SK-N-SH (cell line): ENCODE measurements at regions of chr17 and their contacts with region 1.

Region 1: GRCh38 chr17:19744922-19745757 is 3.0 kb downstream of the ALDH3A1 start:
- DNase-seq: peak; percentile 95
- H3K4me3 ChIP-seq: peak overlapping the region in 1 of 2 experiments; percentile 47; a peak in 3 of 4 replicates
- H3K27ac ChIP-seq: no peak overlapping the region; a peak in 1 of 4 replicates
- H3K4me1 ChIP-seq: peaks cover 0 to 6% of the 10 kb centered on the region in 2 experiments; a peak in 1 of 4 replicates
- H3K27me3 ChIP-seq: no peaks in the 10 kb centered on the region
- CTCF ChIP-seq: peak; percentile 70
- EP300 ChIP-seq: no peak
- RAD21 ChIP-seq: peak; percentile 65

Region 2: DNA sequence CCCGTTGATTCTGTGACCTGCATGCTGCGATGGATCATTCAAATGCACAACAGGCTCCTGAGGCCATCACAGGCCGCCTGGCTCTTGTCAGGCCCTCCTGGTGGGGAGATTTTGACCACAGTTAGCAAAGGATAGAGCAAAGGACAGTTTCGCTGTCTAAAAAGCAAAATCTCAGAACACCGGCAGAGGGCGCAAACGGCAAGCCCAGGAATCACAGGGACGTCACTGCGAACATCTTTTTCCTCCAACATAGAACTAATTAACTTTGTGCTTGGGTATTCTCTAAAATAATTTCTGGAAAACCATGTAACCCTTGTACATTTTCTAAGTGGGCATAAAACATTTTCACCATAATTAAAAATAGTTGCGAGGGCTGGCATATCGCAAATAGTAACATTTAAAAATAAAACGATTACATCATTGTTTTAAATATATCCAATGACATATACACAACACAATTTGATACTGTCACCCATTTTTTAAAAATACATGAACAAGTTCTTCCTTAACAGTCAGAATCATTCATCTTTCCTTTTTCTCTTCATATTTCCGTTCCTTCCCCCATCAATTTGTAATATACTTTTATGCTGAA is 231.1 kb before region 1 on chr17:
- CTCF ChIA-PET with region 1: interaction called, 13 read pairs
- POLR2A ChIA-PET with region 1: no interaction called
- DNase-seq: peak; percentile 74
- H3K4me3 ChIP-seq: no peak overlapping the region; a peak in 1 of 4 replicates
- H3K27ac ChIP-seq: peak overlapping the region in 1 of 2 experiments; percentile 16; a peak in 1 of 4 replicates
- H3K4me1 ChIP-seq: peaks cover 0 to 5% of the 10 kb centered on the region in 2 experiments; a peak in 1 of 4 replicates
- H3K27me3 ChIP-seq: no peaks in the 10 kb centered on the region
- CTCF ChIP-seq: peak; percentile 97
- EP300 ChIP-seq: no peak
- RAD21 ChIP-seq: peak; percentile 98

Region 3: DNA sequence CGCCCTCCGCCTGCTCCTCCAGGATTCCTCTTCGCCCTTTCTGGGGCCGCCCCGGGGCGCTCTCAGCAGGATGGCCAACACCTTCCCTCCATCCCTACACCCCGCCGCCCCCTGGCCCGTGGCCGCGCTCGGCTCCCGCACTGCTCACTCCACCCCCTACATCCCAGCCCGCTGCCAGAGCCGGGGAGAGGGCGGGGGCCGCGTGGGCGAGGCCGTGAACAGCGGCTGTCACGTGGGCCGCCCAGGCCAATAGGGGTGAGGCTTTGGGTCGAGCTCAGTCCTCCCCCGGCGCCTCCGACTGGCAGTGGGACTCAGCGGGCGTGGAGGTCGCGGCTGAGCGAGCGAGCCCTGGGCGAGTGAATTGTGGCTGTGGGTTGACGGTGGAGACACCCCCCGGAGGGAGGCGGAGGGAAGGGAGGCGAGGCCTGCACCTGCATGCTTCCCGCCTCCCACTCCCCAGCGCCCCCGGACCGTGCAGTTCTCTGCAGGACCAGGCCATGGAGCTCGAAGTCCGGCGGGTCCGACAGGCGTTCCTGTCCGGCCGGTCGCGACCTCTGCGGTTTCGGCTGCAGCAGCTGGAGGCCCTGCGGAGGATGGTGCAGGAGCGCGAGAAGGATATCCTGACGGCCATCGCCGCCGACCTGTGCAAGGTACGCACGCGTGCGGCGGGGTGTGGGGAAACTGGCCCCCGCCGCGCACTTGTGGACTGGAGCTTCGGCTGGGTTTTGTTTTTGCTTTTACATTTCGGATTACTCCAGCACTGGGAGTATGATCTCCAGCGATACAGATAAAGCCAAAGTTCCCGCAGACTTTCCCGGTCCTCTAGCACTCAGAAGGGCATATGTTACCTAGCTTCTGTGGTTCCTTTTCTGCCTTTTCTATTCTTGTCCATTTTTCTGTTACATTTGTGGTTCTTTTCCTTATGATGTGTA is 96.4 kb before region 1 on chr17 and contains the start of gene ALDH3A2:
- CTCF ChIA-PET with region 1: interaction called, 13 read pairs
- POLR2A ChIA-PET with region 1: interaction called, 5 read pairs
- DNase-seq: peak; percentile 99
- H3K4me3 ChIP-seq: peak within 1 kb of the TSS; percentile 76 to 87
- H3K27ac ChIP-seq: peak within 1 kb of the TSS; percentile 52 to 89
- H3K4me1 ChIP-seq: peaks cover 14 to 31% of the 10 kb centered on the region in 2 experiments
- H3K27me3 ChIP-seq: no peaks in the 10 kb centered on the region
- CTCF ChIP-seq: 0 out of 2 replicates have a peak, but pooled peaks have one; percentile 18
- EP300 ChIP-seq: no peak; a peak in 1 of 4 replicates
- RAD21 ChIP-seq: 0 out of 2 replicates have a peak, but pooled peaks have one; percentile 28
- polyA plus RNA-seq, gene ALDH3A2: 16.6 and 23.3 TPM in 2 replicates

Region 4: GRCh38 chr17:19728079-19728495 is 17.1 kb before region 1 on chr17:
- CTCF ChIA-PET with region 1: interaction called, 19 read pairs
- POLR2A ChIA-PET with region 1: interaction called, 3 read pairs
- DNase-seq: peak; percentile 88
- H3K4me3 ChIP-seq: no peak overlapping the region
- H3K27ac ChIP-seq: peak overlapping the region in 1 of 2 experiments; percentile 80; a peak in 2 of 4 replicates
- H3K4me1 ChIP-seq: peaks cover 0 to 19% of the 10 kb centered on the region in 2 experiments; a peak in 2 of 4 replicates
- H3K27me3 ChIP-seq: no peaks in the 10 kb centered on the region
- CTCF ChIP-seq: no peak
- EP300 ChIP-seq: no peak
- RAD21 ChIP-seq: no peak

Region 5: GRCh38 chr17:19830061-19830460 is 84.9 kb after region 1 on chr17:
- CTCF ChIA-PET with region 1: no interaction called
- POLR2A ChIA-PET with region 1: no interaction called
- DNase-seq: no peak
- H3K4me3 ChIP-seq: no peak overlapping the region
- H3K27ac ChIP-seq: no peak overlapping the region
- H3K4me1 ChIP-seq: no peaks in the 10 kb centered on the region
- H3K27me3 ChIP-seq: no peaks in the 10 kb centered on the region
- CTCF ChIP-seq: no peak
- EP300 ChIP-seq: no peak
- RAD21 ChIP-seq: no peak